Uterus (tissue), 4 donors: ENCODE measurements at regions of chr17 and their contacts with region 1.

Region 1: GRCh38 chr17:79607940-79608623 is 2.8 kb downstream of the RBFOX3 start:
- DNase-seq: peak; percentile 22 to 30
- H3K4me3 ChIP-seq: peak overlapping the region in 1 of 2 donors; percentile 28
- H3K27ac ChIP-seq: no peak overlapping the region
- H3K4me1 ChIP-seq: no peaks in the 10 kb centered on the region
- H3K27me3 ChIP-seq: no peaks in the 10 kb centered on the region
- CTCF ChIP-seq: no peak
- POLR2A ChIP-seq: no peak

Region 2: DNA sequence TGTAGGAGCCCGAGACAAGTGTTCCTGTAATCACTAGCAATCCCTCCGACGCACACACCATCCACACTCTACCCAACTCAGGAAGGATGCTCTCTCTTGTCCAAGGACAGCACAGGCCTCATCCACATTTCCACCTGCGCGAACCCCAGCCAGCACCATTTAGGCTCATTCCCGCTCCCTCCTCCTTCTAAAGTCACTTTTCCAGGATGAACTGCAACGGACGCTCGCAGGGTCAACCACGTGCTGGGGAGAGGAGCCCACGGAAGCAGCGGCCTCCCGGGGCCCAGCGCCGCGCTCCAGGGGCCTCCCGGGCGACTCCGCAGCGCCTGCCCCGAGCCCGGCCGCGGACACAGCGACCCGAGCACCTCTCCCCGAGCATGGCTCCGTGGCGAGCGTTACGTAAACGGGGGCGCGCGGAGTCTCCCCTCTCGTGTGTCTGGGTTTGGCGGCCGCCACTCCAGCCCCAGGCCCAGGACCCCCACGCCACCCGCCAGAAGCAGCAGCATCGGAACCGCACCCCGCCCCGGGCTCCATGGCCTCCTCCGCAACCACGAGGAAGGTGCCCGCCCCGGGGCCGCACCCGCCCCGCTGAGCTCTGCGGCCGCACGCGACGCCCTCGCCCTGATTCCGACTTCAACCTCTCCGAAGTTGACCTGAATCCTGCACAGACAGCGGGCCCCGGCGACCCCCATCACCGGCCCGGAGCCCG is 768.2 kb before region 1 on chr17:
- intact Hi-C with region 1: loop called (anchors 5 kb)
- DNase-seq: peak in 1 of 2 donors; percentile 56
- H3K4me3 ChIP-seq: peak overlapping the region; percentile 86 to 95
- H3K27ac ChIP-seq: peak overlapping the region; percentile 89 to 97
- H3K4me1 ChIP-seq: peaks cover 0 to 11% of the 10 kb centered on the region in 2 donors
- H3K27me3 ChIP-seq: no peaks in the 10 kb centered on the region
- CTCF ChIP-seq: no peak
- POLR2A ChIP-seq: no peak